CD4-positive, alpha-beta T cell (primary cell): ENCODE measurements at regions of chr16 and their contacts with region 1.

Region 1: DNA sequence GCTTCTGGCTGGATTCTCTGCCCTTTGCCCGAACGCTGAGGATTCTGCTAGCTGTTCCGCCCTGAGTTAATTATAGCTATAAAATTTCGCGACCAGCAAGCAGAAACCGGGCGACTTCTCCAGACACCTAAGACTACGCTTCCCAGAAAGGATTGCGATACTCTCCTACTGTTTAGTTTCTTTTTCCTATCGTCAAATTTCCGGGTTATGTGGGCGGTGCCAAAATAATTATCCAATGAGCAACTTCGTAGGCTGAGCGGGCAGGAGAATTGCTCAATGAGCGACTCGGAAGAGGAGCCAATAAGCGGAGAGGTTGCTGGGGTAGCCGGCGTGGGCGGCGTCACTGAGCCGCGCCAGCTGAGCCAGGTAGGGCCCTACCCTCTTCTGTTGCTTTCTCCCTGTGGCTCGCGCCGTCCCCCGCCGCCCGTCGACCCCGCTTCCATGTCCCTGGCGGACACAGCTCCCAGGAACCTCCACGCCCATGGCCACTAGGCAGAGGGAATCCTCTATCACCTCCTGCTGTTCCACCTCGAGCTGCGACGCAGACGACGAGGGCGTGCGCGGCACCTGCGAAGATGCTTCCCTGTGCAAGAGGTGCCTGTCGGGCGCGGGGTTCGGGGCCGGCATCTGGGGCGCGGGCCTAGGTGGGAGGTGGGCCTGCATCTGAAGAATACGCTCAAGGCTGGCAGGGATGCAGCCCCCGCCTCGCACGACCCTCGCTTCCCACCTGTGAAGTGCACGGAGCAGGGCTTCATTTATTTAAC is at the start of gene LCMT1:
- DNase-seq: peak; percentile 78 to 98 (median 85)
- ATAC-seq: peak; percentile 91
- H3K4me3 ChIP-seq: peak within 1 kb of the TSS; percentile 71
- H3K4me3 Mint-ChIP-seq: peak within 1 kb of the TSS; percentile 97
- H3K27ac ChIP-seq: peak within 1 kb of the TSS; percentile 28 to 32
- H3K27ac Mint-ChIP-seq: peak within 1 kb of the TSS; percentile 72
- H3K4me1 ChIP-seq: peaks cover 33% of the 10 kb centered on the region
- H3K4me1 Mint-ChIP-seq: peaks cover 71% of the 10 kb centered on the region
- H3K27me3 ChIP-seq: no peaks in the 10 kb centered on the region
- H3K27me3 Mint-ChIP-seq: no peaks in the 10 kb centered on the region
- CTCF ChIP-seq: no peak
- total RNA-seq, gene LCMT1: 22.5 to 28.2 TPM

Region 2: GRCh38 chr16:24950275-24950674 is 161.3 kb before region 1 on chr16:
- CTCF ChIA-PET with region 1: no interaction called
- POLR2A ChIA-PET with region 1: no interaction called
- intact Hi-C with region 1: loop called in 1 of 2 experiments (anchors 10 kb)
- DNase-seq: no peak
- ATAC-seq: no peak
- H3K4me3 ChIP-seq: no peak overlapping the region
- H3K4me3 Mint-ChIP-seq: no peak overlapping the region
- H3K27ac ChIP-seq: no peak overlapping the region
- H3K27ac Mint-ChIP-seq: no peak overlapping the region
- H3K4me1 ChIP-seq: no peaks in the 10 kb centered on the region
- H3K4me1 Mint-ChIP-seq: no peaks in the 10 kb centered on the region
- H3K27me3 ChIP-seq: no peaks in the 10 kb centered on the region
- H3K27me3 Mint-ChIP-seq: no peaks in the 10 kb centered on the region
- CTCF ChIP-seq: no peak

Region 3: GRCh38 chr16:25031441-25032307 is 79.9 kb before region 1 on chr16:
- CTCF ChIA-PET with region 1: interaction called, 3 read pairs
- POLR2A ChIA-PET with region 1: interaction called, 18 read pairs
- intact Hi-C with region 1: loop called (anchors 1 kb)
- DNase-seq: peak; percentile 81 to 97 (median 86)
- ATAC-seq: peak; percentile 99
- H3K4me3 ChIP-seq: peak overlapping the region; percentile 88
- H3K4me3 Mint-ChIP-seq: peak overlapping the region; percentile 90
- H3K27ac ChIP-seq: peak overlapping the region in 1 of 2 donors; percentile 52
- H3K27ac Mint-ChIP-seq: peak overlapping the region; percentile 90
- H3K4me1 ChIP-seq: peaks cover 20% of the 10 kb centered on the region
- H3K4me1 Mint-ChIP-seq: peaks cover 30% of the 10 kb centered on the region
- H3K27me3 ChIP-seq: no peaks in the 10 kb centered on the region
- H3K27me3 Mint-ChIP-seq: no peaks in the 10 kb centered on the region
- CTCF ChIP-seq: no peak

Region 4: DNA sequence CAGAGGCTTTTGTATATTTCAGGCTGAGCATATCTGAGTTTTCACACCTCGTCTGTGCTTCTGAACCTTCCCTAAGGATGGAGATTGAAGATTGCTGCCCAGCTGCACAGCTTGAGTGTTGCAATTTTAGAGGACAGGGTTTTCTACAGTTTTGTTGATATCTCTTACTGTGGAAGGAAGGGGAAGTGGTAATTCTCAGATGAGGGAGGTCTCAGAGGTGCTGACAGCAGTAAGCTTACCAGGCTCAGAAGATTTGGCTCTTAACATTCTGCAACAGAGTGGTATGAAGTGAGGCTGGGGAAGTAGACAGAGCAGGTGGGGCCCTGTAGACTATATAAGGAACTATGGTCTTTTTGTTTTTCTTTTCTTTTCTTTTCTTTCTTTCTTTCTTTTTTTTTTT is 50.7 kb before region 1 on chr16:
- CTCF ChIA-PET with region 1: no interaction called
- POLR2A ChIA-PET with region 1: interaction called, 68 read pairs
- intact Hi-C with region 1: loop called in 1 of 2 experiments (anchors 2 kb)
- DNase-seq: peak in 9 of 14 experiments; percentile 4 to 88 (median 36)
- ATAC-seq: peak; percentile 99
- H3K4me3 ChIP-seq: no peak overlapping the region
- H3K4me3 Mint-ChIP-seq: peak overlapping the region; percentile 81
- H3K27ac ChIP-seq: peak overlapping the region; percentile 48 to 76
- H3K27ac Mint-ChIP-seq: peak overlapping the region; percentile 96
- H3K4me1 ChIP-seq: peaks cover 52% of the 10 kb centered on the region
- H3K4me1 Mint-ChIP-seq: peaks cover 58% of the 10 kb centered on the region
- H3K27me3 ChIP-seq: no peaks in the 10 kb centered on the region
- H3K27me3 Mint-ChIP-seq: no peaks in the 10 kb centered on the region
- CTCF ChIP-seq: no peak

Region 5: GRCh38 chr16:25257504-25257955 is 145.9 kb after region 1 on chr16 and contains the start of gene ZKSCAN2:
- CTCF ChIA-PET with region 1: no interaction called
- POLR2A ChIA-PET with region 1: interaction called, 3 read pairs
- intact Hi-C with region 1: loop called in 1 of 2 experiments (anchors 10 kb)
- DNase-seq: peak; percentile 56 to 91 (median 78)
- ATAC-seq: peak; percentile 68
- H3K4me3 ChIP-seq: peak within 1 kb of the TSS; percentile 87
- H3K4me3 Mint-ChIP-seq: peak within 1 kb of the TSS; percentile 96
- H3K27ac ChIP-seq: peak within 1 kb of the TSS; percentile 80 to 92
- H3K27ac Mint-ChIP-seq: peak within 1 kb of the TSS; percentile 94
- H3K4me1 ChIP-seq: peaks cover 39% of the 10 kb centered on the region
- H3K4me1 Mint-ChIP-seq: peaks cover 68% of the 10 kb centered on the region
- H3K27me3 ChIP-seq: no peaks in the 10 kb centered on the region
- H3K27me3 Mint-ChIP-seq: no peaks in the 10 kb centered on the region
- CTCF ChIP-seq: no peak
- total RNA-seq, gene ZKSCAN2: 9.5 to 10.2 TPM